ENCODE measurements at regions of chr5 and their contacts with region 1.

Region 1: DNA sequence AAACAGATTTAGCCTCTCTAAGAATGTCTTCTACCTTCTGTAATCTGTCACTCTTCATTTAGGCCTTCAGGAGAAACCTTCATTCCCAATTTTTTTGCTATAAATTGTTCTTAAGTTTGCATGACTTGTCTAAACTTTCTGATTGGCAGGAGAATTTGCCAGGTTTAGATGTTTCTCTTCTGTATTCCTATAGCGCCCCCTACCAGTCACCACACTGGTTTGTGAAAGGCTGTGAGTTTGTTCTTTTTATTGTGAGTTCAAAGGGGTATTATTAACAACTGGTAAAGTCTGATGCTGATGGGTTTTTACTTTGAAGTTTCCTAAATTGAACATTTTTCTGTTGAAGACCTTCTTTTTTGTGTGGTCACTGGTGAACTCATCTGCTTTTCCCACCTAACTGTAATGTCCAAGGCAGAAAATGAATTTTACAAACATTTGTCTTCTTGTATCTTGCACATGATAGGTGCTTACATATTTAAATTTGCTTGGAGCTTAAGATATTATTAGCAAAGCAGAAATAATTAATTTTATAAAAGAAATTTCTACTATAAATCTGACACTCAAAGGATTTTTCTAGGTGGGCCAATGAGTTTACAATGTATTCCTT is 18.4 kb upstream of the F2RL2 start:
- H3K4me3 ChIP-seq: no peak overlapping the region
- H3K27ac ChIP-seq: no peak overlapping the region
- H3K4me1 ChIP-seq: no peaks in the 10 kb centered on the region
- CTCF ChIP-seq: peak; percentile 48; the same call in 1 of the 2 replicates

Region 2: GRCh38 chr5:76601470-76601869 is 40.1 kb before region 1 on chr5:
- CTCF ChIA-PET with region 1: interaction called, 48 read pairs
- POLR2A ChIA-PET with region 1: no interaction called
- H3K4me3 ChIP-seq: no peak overlapping the region
- H3K27ac ChIP-seq: no peak overlapping the region
- H3K4me1 ChIP-seq: no peaks in the 10 kb centered on the region
- CTCF ChIP-seq: no peak

Region 3: GRCh38 chr5:76617675-76618074 is 23.9 kb before region 1 on chr5:
- CTCF ChIA-PET with region 1: interaction called, 10 read pairs
- POLR2A ChIA-PET with region 1: no interaction called
- H3K4me3 ChIP-seq: no peak overlapping the region
- H3K27ac ChIP-seq: no peak overlapping the region
- H3K4me1 ChIP-seq: 0 out of 2 replicates have a peak, but pooled peaks cover 3% of the 10 kb centered on the region
- CTCF ChIP-seq: no peak

Region 4: DNA sequence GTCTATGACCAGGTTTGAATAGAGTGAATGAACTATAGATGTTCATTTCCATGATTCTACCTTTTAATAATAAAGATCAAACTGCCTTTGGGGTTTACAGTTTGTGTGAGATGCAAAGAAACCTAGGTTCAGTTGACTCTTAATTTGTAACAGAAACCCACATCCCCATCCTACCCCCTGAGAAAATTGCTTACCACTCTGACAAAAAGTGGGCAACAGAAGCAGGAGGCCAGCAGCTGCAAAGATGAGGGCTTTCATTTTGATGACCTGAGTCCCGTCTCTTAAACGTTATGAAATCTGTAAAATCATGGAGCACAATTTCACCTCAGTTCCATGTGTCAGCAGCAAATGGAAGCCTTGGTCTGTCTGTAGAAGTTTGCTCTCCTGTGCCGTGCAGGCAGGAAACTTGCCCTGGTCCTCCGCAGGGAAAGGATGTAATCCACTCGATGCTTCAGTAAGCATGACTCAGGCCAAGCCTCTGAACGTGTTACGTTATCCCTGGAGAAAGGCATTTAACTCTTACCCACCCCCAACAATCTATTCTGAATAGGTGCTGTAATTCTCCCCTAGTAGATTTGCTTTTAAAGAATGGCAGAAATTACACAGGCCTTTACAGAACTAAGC is 18.5 kb before region 1 on chr5 and contains the start of gene F2RL2:
- CTCF ChIA-PET with region 1: interaction called, 13 read pairs
- POLR2A ChIA-PET with region 1: no interaction called
- H3K4me3 ChIP-seq: no peak within 1 kb of the TSS
- H3K27ac ChIP-seq: no peak within 1 kb of the TSS
- H3K4me1 ChIP-seq: no peaks in the 10 kb centered on the region
- CTCF ChIP-seq: no peak

Region 5: GRCh38 chr5:76964060-76964459 is 322.4 kb after region 1 on chr5:
- CTCF ChIA-PET with region 1: no interaction called
- POLR2A ChIA-PET with region 1: no interaction called
- H3K4me3 ChIP-seq: no peak overlapping the region
- H3K27ac ChIP-seq: no peak overlapping the region
- H3K4me1 ChIP-seq: 0 out of 2 replicates have a peak, but pooled peaks cover 3% of the 10 kb centered on the region
- CTCF ChIP-seq: no peak

Measured in HEK293 (cell line).